Dendritic cell treated with granulocyte-macrophage colony-stimulating factor and Interleukin-4, amounts not matched to agents 40 ng/mL and 50 ng/mL, for 4 days (primary cell): ENCODE measurements at regions of chr1 and their contacts with region 1.

Region 1: DNA sequence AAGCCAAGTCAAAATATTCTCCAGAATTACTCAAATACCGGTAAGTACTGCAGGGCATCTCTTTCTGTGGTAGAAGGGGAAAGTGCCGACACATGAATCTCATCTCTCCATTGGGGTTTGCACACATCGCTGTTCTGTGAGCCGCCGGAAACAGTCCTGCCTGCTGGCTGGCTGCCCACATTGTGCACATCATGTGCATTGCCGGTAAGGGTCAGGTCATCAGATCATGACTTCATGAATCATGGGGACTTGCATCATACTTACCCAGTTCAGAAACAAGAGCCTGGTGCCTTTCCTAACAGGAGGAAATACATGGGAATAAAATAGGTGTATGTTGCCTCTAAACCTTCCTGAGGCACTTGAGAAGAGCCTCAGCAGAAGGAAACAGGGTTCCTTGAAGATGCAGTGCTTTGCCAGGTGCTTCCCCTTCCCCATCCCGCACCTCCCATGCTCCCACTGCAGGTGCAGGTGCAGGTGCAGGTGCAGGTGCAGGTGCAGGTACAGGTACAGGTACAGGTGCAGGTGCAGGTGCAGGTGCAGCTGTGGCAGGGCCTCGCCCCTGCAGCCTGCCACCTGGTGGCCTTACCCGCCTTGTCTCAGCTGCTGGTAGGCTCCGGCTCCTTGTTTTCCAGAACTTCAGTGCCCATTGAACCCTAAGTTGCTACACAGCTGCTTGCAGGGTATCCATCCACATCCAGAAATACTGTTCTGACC is 26.5 kb downstream of the GPR137B start:
- H3K4me3 Mint-ChIP-seq: no peak overlapping the region
- H3K27ac Mint-ChIP-seq: no peak overlapping the region
- H3K4me1 Mint-ChIP-seq: peaks cover 26% of the 10 kb centered on the region
- H3K27me3 Mint-ChIP-seq: no peaks in the 10 kb centered on the region

Region 2: DNA sequence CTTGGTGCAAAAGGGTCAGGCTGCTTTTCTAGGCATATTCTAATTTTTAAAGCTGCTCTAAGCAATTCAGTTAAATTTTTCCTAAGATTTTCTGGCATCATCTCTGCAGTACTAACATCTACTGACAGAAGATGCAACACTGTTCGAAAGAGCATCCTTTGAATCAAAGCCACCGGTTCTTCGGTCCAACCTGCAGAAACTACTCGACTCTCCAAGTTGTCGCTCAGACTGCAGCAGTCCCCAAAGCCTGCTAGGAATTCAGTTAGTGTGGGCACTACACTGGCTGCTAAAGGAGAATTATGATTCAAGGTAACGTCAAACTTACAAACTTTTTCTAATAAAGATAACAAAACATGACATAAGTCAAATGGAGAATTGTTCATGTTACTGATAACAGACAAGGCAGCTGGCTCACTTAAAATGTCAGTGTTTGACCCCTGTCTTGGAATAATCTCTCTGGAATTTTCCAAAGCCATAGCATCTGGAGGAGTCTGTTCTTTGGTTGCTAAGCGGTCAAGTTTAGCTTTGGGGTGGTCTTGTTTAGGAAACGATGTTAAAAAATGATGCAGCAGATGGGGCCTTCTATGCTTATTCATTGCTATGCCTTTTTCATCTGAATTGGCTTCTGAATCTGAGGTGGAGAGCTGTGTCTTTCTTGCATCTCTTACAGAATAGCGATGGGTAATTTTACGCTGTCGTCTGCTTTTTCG is 359.0 kb before region 1 on chr1:
- intact Hi-C with region 1: no loop called
- H3K4me3 Mint-ChIP-seq: no peak overlapping the region
- H3K27ac Mint-ChIP-seq: no peak overlapping the region
- H3K4me1 Mint-ChIP-seq: peaks cover 4% of the 10 kb centered on the region
- H3K27me3 Mint-ChIP-seq: no peaks in the 10 kb centered on the region

Region 3: GRCh38 chr1:235984041-235984825 is 184.6 kb before region 1 on chr1:
- intact Hi-C with region 1: no loop called
- H3K4me3 Mint-ChIP-seq: no peak overlapping the region
- H3K27ac Mint-ChIP-seq: no peak overlapping the region
- H3K4me1 Mint-ChIP-seq: peaks cover 35% of the 10 kb centered on the region
- H3K27me3 Mint-ChIP-seq: no peaks in the 10 kb centered on the region

Region 4: GRCh38 chr1:236214761-236215160 is 45.9 kb after region 1 on chr1:
- intact Hi-C with region 1: loop called (anchors 10 kb)
- H3K4me3 Mint-ChIP-seq: no peak overlapping the region
- H3K27ac Mint-ChIP-seq: no peak overlapping the region
- H3K4me1 Mint-ChIP-seq: no peaks in the 10 kb centered on the region
- H3K27me3 Mint-ChIP-seq: no peaks in the 10 kb centered on the region

Region 5: DNA sequence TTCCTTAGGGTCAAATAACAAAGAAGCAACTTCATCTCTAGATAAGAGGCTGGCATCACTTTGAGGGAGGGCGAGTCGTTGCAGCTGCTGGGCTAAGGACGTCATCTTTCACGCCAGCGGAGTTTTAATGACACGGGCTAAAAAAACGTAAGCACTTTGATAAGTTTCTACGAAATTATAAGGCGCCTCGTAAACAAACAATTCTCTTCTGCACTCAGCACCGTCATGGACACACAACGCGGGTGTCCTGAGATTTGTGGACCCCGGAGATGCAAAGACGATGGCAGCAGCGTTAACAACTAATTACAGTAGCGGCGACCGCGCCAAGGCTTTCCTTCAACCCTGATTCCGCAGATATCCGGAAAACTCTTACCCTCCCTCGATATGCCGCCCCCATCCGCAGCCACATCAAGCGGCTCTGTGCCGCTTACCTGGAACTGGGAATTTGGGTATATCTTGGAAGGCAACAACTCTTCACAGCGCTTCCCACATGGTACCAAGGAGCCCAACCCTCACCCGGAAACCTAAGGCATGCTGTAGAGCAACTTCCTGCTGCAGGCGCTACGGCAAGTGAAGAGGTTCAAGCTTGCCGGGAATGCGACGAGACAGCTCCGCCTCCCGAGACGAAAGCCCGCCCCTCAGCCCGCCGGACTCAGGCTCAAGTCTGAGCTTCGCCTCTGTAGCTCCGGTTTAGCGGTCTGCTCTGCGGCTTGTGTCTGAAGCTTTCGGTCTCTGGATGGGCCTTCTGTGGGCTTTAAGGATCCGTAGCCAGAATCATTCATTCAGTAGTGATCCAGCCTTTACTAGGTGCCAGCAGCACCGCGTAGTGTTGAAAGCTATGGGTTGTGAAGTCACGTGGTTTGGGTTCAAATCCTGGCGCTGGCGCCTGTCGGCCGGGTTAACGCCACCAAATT is 435.4 kb after region 1 on chr1 and contains the start of gene HEATR1:
- intact Hi-C with region 1: no loop called
- H3K4me3 Mint-ChIP-seq: peak within 1 kb of the TSS; percentile 85
- H3K27ac Mint-ChIP-seq: peak within 1 kb of the TSS; percentile 86
- H3K4me1 Mint-ChIP-seq: peaks cover 12% of the 10 kb centered on the region
- H3K27me3 Mint-ChIP-seq: peaks cover 8% of the 10 kb centered on the region